HAP-1 (cell line): ENCODE measurements at regions of chr11 and their contacts with region 1.

Region 1: DNA sequence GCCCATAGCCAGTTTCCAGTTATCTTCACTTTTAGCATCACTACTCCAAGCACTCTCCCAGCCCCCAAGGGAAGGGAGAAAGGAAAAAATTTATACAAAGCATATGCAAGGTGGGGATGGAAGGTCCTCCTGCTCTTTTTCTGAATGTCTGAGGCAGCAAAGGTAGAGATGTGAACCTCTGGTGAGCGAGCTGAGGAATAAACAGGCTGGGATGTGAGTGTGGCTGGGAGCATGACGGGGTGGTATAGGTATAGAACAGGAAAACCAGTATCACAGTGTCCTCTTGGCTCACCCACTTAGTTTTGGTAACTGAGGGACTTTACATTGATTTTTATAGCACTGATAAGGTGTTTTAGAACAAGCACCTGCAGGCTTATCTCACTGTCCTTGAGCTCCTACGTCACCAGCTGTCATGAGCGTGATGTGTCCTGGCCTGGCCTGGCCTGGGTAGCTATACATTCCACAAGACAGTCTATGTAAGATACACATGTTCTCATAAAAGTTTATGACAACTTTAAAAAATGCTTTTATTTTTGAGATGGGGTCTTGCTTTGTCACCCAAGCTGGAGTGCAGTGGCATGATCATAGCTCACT is 10.3 kb upstream of the POLD3 start:
- DNase-seq: no peak
- H3K4me3 ChIP-seq: no peak overlapping the region
- H3K4me1 ChIP-seq: no peaks in the 10 kb centered on the region
- H3K27me3 ChIP-seq: no peaks in the 10 kb centered on the region

Region 2: GRCh38 chr11:74255741-74256369 is 326.2 kb before region 1 on chr11:
- in situ Hi-C with region 1: loop called (anchors 10 kb)
- DNase-seq: peak; percentile 40 to 64
- H3K4me3 ChIP-seq: no peak overlapping the region
- H3K4me1 ChIP-seq: no peaks in the 10 kb centered on the region
- H3K27me3 ChIP-seq: no peaks in the 10 kb centered on the region

Region 3: DNA sequence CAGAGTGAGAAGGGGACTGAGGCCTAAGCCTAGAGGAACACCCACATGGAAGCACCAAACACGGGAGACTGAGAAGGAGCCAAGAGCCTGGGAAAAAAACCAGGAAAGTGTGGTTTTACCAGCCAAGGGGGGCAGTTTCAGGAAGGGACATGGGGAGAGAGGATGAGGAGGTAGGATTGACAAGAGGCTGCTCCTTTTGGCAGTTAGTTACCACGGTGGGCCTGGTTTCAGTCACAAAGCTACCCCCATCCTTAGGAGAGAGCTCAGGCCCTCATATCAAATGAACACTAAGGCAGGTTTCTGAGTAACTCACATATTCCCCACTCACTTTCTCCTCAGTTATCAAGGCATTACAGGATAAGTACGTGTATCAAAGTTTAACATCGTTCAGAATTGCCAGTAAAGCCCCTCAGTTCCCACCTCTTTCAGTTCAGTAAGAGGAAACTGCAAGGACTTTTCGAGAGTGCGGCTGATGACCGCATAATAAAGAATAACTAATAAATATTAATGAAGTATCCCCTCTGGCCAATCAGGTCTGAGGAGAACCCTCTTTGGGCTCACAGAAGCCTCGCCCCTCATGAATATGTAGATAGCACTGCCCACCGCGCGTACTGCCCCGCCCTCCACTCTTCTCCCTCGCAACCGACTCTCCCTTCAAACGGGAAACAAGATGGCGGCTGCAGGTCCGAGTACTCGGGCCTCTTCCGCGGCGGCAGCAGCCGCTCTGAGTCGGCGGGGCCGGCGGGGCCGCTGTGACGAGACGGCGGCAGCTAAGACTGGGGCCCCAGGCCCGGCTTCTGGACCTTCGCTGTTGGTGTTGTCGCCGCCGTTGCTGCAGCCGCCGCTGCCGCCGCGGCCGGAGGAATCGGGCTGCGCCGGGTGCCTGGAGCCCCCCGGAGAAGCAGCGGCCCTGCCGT is 166.4 kb after region 1 on chr11 and contains the start of gene RNF169:
- in situ Hi-C with region 1: no loop called
- DNase-seq: peak; percentile 95 to 99
- H3K4me3 ChIP-seq: peak within 1 kb of the TSS; percentile 82
- H3K4me1 ChIP-seq: peaks cover 9% of the 10 kb centered on the region
- H3K27me3 ChIP-seq: no peaks in the 10 kb centered on the region